ENCODE measurements at regions of chr11 and their contacts with region 1.

Region 1: GRCh38 chr11:117143871-117144476 is at the start of gene PAFAH1B2:
- DNase-seq: peak; percentile 93
- H3K4me3 Mint-ChIP-seq: peak within 1 kb of the TSS; percentile 100
- H3K27ac Mint-ChIP-seq: peak within 1 kb of the TSS; percentile 95
- H3K4me1 Mint-ChIP-seq: peaks cover 40% of the 10 kb centered on the region
- H3K27me3 Mint-ChIP-seq: peaks cover 11% of the 10 kb centered on the region
- total RNA-seq, gene PAFAH1B2: 72.3 and 76.9 TPM in 2 replicates

Region 2: GRCh38 chr11:116772443-116773202 is 371.4 kb before region 1 on chr11 and contains the start of gene BUD13:
- intact Hi-C with region 1: loop called (anchors 5 kb)
- DNase-seq: peak; percentile 93
- H3K4me3 Mint-ChIP-seq: peak within 1 kb of the TSS; percentile 99
- H3K27ac Mint-ChIP-seq: peak within 1 kb of the TSS; percentile 97
- H3K4me1 Mint-ChIP-seq: peaks cover 39% of the 10 kb centered on the region
- H3K27me3 Mint-ChIP-seq: no peaks in the 10 kb centered on the region
- total RNA-seq, gene BUD13: 30.4 and 34.3 TPM in 2 replicates

Region 3: GRCh38 chr11:117098269-117099232 is 45.4 kb before region 1 on chr11 and contains the start of gene SIK3:
- intact Hi-C with region 1: loop called (anchors 5 kb)
- DNase-seq: peak; percentile 87
- H3K4me3 Mint-ChIP-seq: peak within 1 kb of the TSS; percentile 98
- H3K27ac Mint-ChIP-seq: peak within 1 kb of the TSS; percentile 90
- H3K4me1 Mint-ChIP-seq: peaks cover 48% of the 10 kb centered on the region
- H3K27me3 Mint-ChIP-seq: peaks cover 6% of the 10 kb centered on the region
- total RNA-seq, gene SIK3: 25.3 and 25.6 TPM in 2 replicates

Region 4: GRCh38 chr11:117178210-117179034 is 34.4 kb after region 1 on chr11 and contains the start of gene SIDT2:
- intact Hi-C with region 1: loop called (anchors 1 kb)
- DNase-seq: peak; percentile 86
- H3K4me3 Mint-ChIP-seq: peak within 1 kb of the TSS; percentile 94
- H3K27ac Mint-ChIP-seq: peak within 1 kb of the TSS; percentile 86
- H3K4me1 Mint-ChIP-seq: peaks cover 27% of the 10 kb centered on the region
- H3K27me3 Mint-ChIP-seq: no peaks in the 10 kb centered on the region
- total RNA-seq, gene SIDT2: 26.1 and 27.1 TPM in 2 replicates